Mammary epithelial cell (primary cell): ENCODE measurements at regions of chr5 and their contacts with region 1.

Region 1: GRCh38 chr5:138226910-138227309 is 13.8 kb upstream of the CDC23 start:
- DNase-seq: no peak
- H3K4me3 ChIP-seq: no peak overlapping the region
- H3K27ac ChIP-seq: no peak overlapping the region
- H3K4me1 ChIP-seq: no peaks in the 10 kb centered on the region
- H3K27me3 ChIP-seq: no peaks in the 10 kb centered on the region
- CTCF ChIP-seq: no peak

Region 2: DNA sequence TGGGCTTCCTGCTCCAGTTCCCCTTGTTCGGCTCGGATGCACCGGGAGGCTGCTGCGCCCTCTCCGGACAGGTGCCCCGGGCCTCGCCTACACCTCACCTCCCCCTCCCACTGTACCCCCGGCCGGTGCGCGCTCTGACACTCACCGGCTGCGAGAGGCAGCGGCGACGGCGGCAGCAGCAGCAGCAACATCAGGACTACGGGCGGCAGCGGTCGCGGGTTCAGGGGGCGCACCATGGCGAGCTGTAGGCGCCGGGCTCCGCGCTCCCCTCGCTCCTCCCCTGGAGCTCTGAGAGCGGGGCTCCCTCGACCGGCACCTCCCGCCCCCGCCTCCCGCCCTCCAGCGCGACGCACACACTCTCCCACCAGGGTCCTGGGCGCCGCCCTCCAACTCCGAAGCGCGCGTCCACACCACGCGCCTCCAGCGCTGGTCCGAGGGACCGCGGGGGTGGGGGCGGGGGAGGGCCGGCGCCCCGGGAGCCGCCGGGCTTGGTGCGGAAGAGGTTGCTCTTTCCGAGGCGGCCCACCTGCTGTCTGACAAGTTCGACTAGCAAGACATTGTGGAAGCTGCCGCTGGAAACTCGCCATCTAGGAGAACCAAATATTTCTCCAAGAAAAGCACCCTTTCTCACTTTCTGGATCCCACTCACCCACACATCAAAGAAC is 47.4 kb after region 1 on chr5 and contains the start of gene GFRA3:
- CTCF ChIA-PET with region 1: no interaction called
- dilution Hi-C with region 1: no loop called
- in situ Hi-C with region 1: loop called in 1 of 2 experiments (anchors 10 kb)
- intact Hi-C with region 1: no loop called
- DNase-seq: no peak
- H3K4me3 ChIP-seq: peak within 1 kb of the TSS in 2 of 3 experiments; percentile 29 to 33
- H3K27ac ChIP-seq: no peak within 1 kb of the TSS
- H3K4me1 ChIP-seq: peaks cover 2% of the 10 kb centered on the region
- H3K27me3 ChIP-seq: peaks cover 2% of the 10 kb centered on the region
- CTCF ChIP-seq: no peak
- total RNA-seq, gene GFRA3: not detected

Region 3: DNA sequence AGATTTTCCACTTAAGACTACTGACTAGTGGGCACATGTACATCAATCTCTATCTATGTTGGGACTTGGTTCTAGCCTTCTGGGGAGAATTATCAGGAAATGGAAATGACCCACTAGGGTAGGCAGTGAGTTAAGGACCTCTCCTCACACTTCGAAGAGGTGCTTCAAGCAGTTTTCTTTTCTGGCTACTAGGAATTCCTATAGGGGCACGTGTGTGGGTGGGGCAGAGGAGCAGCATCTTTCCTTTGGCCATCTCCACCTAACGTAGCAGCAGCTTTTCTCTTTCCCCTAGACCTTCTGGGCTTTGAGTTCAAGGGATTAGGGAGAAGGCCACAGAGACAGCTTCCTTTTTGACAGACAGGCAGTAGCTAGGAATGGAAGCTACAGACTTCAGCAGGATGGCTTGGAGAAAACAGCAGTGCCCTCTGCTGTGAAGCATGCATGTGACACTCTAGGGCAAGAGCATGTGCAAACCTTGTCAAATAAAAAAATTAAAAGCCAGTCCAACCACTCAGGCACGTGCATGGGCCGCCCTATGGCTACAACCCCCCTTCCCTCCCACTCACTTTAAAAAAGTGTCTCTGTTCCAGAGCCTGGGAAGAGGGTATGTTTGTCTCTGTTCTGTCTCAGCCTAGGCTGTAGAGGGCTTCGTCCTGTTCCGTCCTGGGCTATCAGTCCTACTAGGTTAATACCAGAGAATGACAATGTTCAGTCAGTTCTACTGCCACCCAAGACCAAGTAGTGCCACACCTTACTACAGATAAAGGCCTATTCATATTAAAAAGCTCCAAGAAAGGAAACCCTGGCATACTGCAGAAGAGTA is 56.2 kb after region 1 on chr5:
- CTCF ChIA-PET with region 1: interaction called, 3 read pairs
- dilution Hi-C with region 1: no loop called
- in situ Hi-C with region 1: loop called in 1 of 2 experiments (anchors 10 kb)
- intact Hi-C with region 1: loop called (anchors 1 kb)
- DNase-seq: peak; percentile 37
- H3K4me3 ChIP-seq: no peak overlapping the region
- H3K27ac ChIP-seq: no peak overlapping the region
- H3K4me1 ChIP-seq: no peaks in the 10 kb centered on the region
- H3K27me3 ChIP-seq: no peaks in the 10 kb centered on the region
- CTCF ChIP-seq: peak; percentile 40 to 72

Region 4: GRCh38 chr5:138337685-138338410 is 110.9 kb after region 1 on chr5 and contains the start of gene FAM53C:
- CTCF ChIA-PET with region 1: no interaction called
- dilution Hi-C with region 1: no loop called
- in situ Hi-C with region 1: no loop called
- intact Hi-C with region 1: loop called (anchors 5 kb)
- DNase-seq: peak; percentile 93
- H3K4me3 ChIP-seq: peak within 1 kb of the TSS; percentile 62 to 84 (median 67)
- H3K27ac ChIP-seq: peak within 1 kb of the TSS; percentile 92
- H3K4me1 ChIP-seq: peaks cover 4% of the 10 kb centered on the region
- H3K27me3 ChIP-seq: no peaks in the 10 kb centered on the region
- CTCF ChIP-seq: no peak
- total RNA-seq, gene FAM53C: 29.6 to 40.2 TPM

Region 5: DNA sequence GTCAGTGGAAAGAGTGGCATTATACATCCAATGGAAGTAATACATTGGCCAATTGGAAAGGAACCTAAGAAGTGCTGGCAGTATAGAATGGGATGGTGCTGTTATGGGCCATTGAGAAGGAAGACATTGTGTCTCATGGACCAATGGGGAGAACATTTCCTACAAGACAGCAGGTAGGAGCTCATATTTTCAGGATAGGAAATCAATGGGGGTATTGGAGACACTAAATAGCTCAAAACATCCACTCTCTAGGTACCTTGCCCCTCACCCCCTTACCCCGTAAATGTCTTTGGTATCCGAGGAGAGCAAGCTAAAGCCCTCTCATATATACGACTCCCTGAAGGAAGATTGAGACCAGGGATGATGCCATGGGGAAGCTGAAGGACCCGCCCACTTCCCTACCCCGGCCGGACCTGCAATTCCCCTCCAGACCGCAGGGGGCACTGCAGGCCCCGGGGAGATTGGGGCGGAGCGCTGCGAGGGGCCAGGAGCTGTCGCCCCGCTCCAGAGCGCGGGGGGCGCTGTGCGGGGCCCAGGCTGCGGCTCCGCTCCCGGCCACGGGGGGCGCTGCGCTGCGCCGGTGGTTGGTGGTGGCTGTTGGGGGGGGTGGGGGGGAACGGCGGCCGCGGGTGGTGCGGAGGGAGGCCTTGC is 125.3 kb after region 1 on chr5 and contains the start of gene KDM3B:
- CTCF ChIA-PET with region 1: no interaction called
- dilution Hi-C with region 1: no loop called
- in situ Hi-C with region 1: no loop called
- intact Hi-C with region 1: loop called (anchors 5 kb)
- DNase-seq: peak; percentile 81
- H3K4me3 ChIP-seq: peak within 1 kb of the TSS; percentile 77 to 83 (median 82)
- H3K27ac ChIP-seq: peak within 1 kb of the TSS; percentile 65
- H3K4me1 ChIP-seq: peaks cover 18% of the 10 kb centered on the region
- H3K27me3 ChIP-seq: no peaks in the 10 kb centered on the region
- CTCF ChIP-seq: peak; percentile 98
- total RNA-seq, gene KDM3B: 35.6 to 42.7 TPM

Region 6: GRCh38 chr5:138408023-138408422 is 181.1 kb after region 1 on chr5:
- CTCF ChIA-PET with region 1: no interaction called
- dilution Hi-C with region 1: no loop called
- in situ Hi-C with region 1: loop called in 1 of 2 experiments (anchors 25 kb)
- intact Hi-C with region 1: loop called (anchors 1 kb)
- DNase-seq: no peak
- H3K4me3 ChIP-seq: no peak overlapping the region
- H3K27ac ChIP-seq: no peak overlapping the region
- H3K4me1 ChIP-seq: no peaks in the 10 kb centered on the region
- H3K27me3 ChIP-seq: no peaks in the 10 kb centered on the region
- CTCF ChIP-seq: no peak